HEK293T (cell line): ENCODE measurements at regions of chr5 and their contacts with region 1.

Region 1: GRCh38 chr5:134289509-134290113 is 63.7 kb upstream of the PPP2CA start:
- DNase-seq: peak; percentile 53

Region 2: DNA sequence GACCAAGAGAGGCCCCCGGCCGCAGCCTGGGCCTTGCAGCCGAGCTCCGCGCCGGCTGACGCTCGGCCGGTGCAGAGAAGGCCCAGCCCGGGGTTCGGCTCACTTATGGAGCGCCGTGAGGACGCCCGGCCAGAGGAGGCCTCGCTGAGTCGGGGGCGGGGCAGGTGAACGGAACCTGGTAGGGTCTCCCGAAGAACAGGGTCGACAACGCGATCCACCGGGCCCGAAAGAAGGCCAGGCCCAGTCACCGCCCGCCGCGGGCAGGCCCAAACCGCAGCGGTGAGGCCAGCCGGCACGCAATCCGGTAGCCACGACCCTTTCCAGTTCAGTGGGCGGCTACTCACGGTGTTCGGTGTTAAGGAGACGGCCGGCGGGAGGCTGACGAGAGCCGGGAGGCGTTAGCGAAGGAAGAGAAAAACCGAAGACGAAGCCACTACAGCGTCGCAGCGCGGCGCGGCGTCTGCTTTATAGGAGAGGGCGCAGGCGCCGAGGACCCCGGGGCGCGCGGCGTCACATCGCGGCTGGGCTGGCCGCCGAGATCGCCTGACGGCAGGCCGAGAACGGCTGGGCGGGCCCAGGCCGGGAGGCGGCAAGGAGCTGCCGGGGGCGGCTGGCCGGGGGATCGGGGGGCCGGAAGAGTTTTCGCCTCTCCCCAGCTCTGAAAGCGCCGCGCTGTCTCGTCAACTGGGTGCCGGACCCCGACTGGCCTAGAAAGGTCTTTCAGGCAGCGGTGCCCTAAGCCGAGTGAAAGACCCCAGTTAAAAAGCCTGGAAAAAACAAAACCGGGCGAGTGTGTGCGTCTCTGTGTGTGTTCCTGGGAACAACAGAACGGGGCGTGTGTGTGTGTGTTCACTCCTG is 112.9 kb before region 1 on chr5 and contains the start of gene SKP1:
- CTCF ChIA-PET with region 1: no interaction called
- POLR2A ChIA-PET with region 1: interaction called, 10 read pairs
- DNase-seq: peak; percentile 79

Region 3: DNA sequence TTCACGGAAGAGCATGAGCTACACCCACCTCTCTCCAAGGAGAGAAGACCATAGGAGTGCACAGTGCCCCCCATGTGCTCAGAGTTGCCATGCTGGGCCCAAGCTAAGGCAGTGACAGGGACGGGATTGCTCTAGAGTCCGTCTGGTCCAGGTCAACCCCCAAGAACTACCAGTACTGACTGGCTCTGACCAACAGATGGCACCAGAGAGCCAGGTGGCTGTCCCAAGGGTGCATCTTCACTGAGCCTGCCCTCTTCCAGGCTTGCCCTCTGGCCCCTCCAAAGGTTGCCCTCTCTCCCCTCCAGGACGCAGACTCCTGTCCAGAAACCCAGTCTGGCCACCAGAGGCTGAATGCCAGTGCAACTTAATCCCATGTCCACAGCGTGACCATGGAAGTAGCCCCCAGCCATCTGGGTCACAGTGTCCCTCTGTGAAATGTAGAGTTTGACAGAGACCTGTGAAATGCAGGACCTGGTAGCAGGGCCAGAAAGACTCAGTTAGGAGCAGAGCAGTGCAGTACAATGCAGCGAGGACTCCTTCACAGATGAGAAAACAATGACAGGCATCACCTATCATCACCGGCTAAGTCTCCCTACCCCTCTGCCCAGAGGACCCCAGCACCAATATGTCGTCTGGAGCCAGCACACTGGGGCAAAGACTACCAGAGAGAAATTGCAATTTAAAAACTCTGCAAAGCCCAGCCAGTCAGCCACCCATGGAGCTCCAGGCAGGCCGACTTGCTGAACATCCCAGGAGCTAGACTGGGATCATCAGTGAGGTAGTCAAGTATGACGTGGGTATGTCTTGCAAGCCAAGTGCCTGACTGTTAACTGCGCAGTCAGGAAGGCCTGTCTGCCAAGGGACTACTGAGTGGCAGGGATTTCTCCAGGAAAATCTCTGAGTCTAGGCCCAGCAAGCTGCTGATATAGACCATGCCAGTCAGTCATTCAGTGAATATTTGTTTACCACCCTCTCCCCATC is 105.2 kb before region 1 on chr5:
- CTCF ChIA-PET with region 1: interaction called, 47 read pairs
- POLR2A ChIA-PET with region 1: interaction called, 3 read pairs
- DNase-seq: peak; percentile 69

Region 4: GRCh38 chr5:134236318-134236717 is 53.3 kb before region 1 on chr5:
- CTCF ChIA-PET with region 1: no interaction called
- POLR2A ChIA-PET with region 1: no interaction called
- DNase-seq: no peak